Ovary (tissue), 10 donors: ENCODE measurements at regions of chr2 and their contacts with region 1.

Region 1: GRCh38 chr2:109510136-109511028 is 103.4 kb downstream of the SEPTIN10 start:
- DNase-seq: peak; percentile 66 to 85 (median 80)
- H3K4me3 ChIP-seq: no peak overlapping the region
- H3K27ac ChIP-seq: no peak overlapping the region
- H3K4me1 ChIP-seq: peaks cover 10% of the 10 kb centered on the region
- H3K27me3 ChIP-seq: no peaks in the 10 kb centered on the region
- CTCF ChIP-seq: peak; percentile 72 to 89 (median 85)
- EP300 ChIP-seq: no peak
- POLR2A ChIP-seq: no peak

Region 2: DNA sequence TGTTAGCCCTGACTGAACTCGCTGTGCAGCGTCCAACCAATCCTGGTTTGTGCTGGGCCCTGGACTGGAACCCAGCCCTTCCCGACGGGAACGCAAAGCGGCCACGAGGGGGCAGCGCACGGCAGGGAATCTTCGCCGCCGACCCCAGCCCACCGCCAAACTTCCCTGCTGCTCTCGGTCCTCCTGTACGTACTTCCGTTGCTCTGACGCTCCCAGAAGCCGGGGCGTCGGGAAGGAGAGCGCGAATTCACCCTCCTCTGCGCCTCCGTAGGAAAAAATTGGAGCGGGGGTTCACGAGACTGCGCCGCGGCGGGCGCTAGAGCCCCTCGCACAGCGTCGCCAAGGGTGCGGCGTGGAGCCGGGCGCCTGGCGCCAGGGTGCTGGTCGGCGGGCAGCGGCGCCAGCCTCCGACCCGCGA is 382.3 kb before region 1 on chr2:
- intact Hi-C with region 1: loop called (anchors 2 to 5 kb)
- DNase-seq: peak; percentile 77 to 90 (median 86)
- H3K4me3 ChIP-seq: peak overlapping the region; percentile 52
- H3K27ac ChIP-seq: peak overlapping the region; percentile 41 to 59
- H3K4me1 ChIP-seq: no peaks in the 10 kb centered on the region
- H3K27me3 ChIP-seq: no peaks in the 10 kb centered on the region
- CTCF ChIP-seq: peak; percentile 57 to 90 (median 89)
- EP300 ChIP-seq: no peak
- POLR2A ChIP-seq: no peak

Region 3: DNA sequence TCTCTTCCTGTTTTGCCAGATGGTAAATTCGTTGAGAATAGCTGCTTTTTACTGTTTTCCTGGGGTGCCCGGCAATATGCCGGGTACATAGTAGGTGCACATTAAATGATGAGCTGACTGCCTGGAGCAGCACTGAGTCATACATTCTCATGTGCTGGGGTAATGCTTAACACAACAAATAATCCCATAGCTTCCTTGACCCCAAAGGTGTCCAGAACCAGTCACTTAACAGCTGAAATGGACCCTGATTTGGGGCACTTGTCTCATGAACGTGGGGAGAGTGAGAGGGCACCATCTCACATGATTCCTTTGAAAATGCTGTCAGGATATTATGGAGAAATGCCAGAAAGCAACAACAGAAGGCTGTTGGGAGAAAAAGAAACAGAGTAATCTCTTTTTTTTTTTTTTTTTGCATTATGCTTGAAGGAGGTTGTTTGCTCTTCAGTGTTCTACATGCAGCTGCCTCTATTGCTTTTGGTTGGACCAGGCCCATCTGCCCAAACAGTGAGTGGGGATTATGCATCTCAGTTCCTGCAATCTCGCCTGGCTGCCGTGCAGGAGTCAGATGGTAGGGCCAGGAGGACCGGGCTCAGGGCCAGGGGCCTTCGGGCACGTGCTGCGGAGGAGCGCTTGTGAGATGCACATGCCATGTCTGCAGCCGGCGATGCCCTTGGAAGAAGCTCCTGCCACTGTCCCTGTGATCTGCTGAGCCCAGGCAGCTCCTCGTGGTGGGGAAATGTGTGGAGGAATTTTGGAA is 219.3 kb before region 1 on chr2:
- intact Hi-C with region 1: loop called in 1 of 4 experiments (anchors 10 kb)
- DNase-seq: peak in 3 of 5 donors; percentile 39 to 60 (median 49)
- H3K4me3 ChIP-seq: no peak overlapping the region
- H3K27ac ChIP-seq: no peak overlapping the region
- H3K4me1 ChIP-seq: peaks cover 7% of the 10 kb centered on the region
- H3K27me3 ChIP-seq: no peaks in the 10 kb centered on the region
- CTCF ChIP-seq: no peak
- EP300 ChIP-seq: no peak
- POLR2A ChIP-seq: no peak

Region 4: DNA sequence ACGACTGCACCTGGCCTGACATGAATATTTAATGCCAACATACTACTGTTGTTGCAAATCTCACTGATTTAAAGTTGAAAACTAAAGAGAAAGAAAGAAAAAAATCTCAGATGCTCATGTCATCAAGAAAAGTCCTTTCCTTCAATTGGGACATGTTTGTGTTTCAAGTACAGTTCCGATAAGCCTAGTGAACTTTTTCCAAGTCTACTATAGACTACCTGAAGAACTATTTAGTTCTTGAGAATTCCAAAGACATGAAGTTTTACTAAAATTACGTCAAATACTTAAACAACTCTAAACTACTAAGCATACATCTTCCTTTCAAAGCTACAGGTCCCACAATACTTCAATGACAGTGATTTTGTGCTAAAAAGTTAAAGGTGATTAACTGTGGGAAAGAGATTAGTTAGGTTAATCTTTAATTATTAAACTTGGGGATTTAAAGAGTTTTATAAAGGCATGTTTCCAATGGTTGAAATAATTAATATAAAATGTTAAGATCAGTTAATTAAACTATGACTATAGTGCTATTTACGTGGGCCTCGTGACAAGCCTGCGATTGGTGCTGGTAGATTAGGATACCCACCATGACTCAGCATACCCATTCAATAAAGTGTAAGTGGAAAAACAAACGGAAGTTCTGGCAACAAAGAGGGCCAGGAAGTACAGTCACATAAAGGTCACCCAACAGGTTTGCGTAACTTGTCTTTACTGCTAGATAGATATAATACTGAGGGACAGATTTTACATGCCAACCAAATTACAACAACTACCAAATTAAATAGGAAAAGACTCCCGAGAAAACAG is 47.9 kb after region 1 on chr2:
- intact Hi-C with region 1: no loop called
- DNase-seq: no peak
- H3K4me3 ChIP-seq: no peak overlapping the region
- H3K27ac ChIP-seq: no peak overlapping the region
- H3K4me1 ChIP-seq: no peaks in the 10 kb centered on the region
- H3K27me3 ChIP-seq: no peaks in the 10 kb centered on the region
- CTCF ChIP-seq: no peak
- EP300 ChIP-seq: no peak
- POLR2A ChIP-seq: no peak